Posterior vena cava (tissue), 2 donors: ENCODE measurements at regions of chr10 and their contacts with region 1.

Region 1: DNA sequence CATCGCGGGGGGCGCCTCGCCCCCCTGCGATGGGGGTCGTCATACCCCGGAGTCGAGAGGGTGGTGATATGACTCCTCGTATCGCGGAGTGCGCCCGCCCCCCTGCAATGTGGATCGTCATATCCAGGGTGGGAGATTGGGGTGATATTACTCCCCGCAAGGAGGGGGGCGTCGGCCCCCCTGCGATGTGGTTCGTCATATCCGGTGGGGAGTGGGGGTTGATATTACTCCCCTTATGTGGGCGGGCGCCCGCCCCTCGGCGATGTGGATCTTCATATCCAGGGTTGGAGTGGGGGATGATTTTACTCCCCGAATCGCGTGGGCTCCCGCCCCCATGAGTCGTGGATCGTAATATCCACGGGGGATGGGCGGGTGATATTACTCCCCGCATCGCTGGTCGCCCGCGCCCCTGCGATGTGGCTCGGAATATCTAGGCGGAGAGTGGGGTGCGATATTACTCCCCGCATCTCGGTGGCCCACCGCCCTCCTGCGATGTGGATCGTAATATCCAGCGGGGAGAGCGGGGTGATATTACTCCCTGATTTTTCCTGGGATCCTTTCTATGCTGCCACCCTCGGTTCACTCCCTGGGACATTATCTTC is 36.9 kb downstream of the MEIG1 start:
- DNase-seq: no peak

Region 2: DNA sequence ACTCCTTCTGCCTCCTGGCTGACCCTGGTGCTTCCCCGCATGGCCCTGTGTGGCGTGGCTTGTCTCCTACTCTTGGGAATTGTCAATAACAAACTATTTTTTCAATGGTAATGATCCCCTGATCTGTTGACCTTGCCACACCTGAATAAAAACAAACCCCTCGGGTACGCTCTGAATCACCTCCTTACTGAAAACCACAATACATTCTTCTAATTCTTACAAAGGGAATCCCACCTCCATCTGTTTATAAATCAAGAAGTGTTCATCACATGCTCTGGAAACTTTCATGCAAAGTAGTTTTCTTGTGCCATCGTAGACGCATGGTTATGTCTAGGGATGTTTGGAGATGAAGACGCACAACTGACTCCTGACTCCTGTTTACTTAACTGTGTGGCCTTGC is 911.2 kb before region 1 on chr10:
- intact Hi-C with region 1: loop called in 1 of 2 experiments (anchors 5 kb)
- DNase-seq: no peak